Activated CD4-positive, alpha-beta T cell treated with anti-CD3 and anti-CD28 coated beads, Interleukin-2, amount 10 ng/mL, durations not matched to agents 24 days and 14 days (primary cell): ENCODE measurements at regions of chr17 and their contacts with region 1.

Region 1: DNA sequence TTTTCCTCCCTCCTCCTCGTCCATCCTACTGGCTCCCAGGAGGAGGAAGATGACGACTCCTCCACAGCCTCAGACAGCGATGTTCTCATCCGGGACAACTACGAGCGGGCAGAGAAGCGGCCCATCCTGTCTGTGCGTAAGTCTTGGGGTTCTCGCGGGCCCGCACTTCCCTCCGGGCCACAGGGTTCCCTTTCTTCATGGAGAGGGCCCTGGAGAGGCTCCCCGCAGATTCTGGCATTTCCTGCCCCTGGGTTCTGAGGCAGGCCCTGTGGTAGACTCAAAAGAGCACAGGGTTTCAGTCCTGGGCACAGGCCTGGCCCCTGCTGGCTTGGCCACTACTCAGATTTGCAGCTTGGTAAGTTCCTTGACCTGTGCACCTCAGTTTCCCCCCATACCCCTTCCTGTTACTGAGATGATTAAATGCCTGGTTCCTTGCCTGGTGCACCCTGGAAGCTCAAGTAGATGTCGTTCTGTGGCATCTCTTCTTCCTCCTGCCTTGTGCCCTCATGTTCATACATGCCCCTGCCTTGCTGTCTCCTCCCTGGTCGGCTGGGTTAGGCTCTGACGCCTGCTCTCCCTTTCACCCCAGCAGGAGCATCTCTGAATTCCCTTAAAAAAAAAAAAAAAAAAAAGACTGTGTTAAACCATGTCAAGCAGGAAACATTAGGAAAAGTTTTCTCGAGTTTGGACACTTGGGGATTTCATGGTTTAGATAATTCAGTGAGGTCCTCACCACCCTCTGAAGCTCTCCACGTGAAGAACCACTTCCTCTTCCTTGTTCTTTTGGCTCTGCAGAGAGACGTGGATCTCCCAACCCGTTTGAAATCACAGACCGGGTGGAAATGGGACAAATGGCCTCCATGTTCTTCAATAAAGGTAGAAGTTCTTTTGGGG is 14.3 kb upstream of the NAT9 start:
- DNase-seq: peak; percentile 62
- H3K4me3 Mint-ChIP-seq: peak overlapping the region; percentile 59
- H3K27ac Mint-ChIP-seq: peak overlapping the region; percentile 83
- H3K4me1 Mint-ChIP-seq: peaks cover 34% of the 10 kb centered on the region
- H3K27me3 Mint-ChIP-seq: no peaks in the 10 kb centered on the region

Region 2: DNA sequence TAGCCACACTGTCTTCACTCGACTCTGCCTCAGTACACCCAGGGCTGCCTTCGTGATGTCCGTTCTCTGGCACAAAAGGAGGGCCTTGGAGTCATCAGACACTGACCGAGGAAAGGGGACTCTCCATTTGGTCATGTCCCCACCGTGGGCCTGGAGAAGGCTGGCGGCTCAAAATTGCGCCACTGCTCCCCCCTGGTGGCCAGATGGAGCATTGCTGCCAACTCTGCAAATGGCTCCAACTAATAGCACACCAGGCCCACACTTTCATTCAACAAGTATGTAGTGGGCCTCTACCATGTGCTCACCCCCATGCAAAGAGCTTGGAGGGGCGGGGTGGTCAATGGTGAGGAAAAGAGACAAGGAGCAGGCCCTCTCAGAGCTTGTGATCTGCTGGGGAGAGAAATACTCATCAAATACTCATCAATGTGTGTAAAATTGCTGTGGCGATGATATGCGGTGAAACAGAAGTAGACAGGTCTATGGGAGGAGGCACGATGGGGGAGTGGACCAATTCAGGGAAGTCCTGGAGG is 74.5 kb after region 1 on chr17:
- intact Hi-C with region 1: loop called (anchors 1 kb)
- DNase-seq: peak; percentile 92
- H3K4me3 Mint-ChIP-seq: no peak overlapping the region
- H3K27ac Mint-ChIP-seq: peak overlapping the region; percentile 64
- H3K4me1 Mint-ChIP-seq: peaks cover 15% of the 10 kb centered on the region
- H3K27me3 Mint-ChIP-seq: peaks cover 15% of the 10 kb centered on the region